Colonic mucosa (tissue), 4 donors: ENCODE measurements at regions of chr20 and their contacts with region 1.

Region 1: DNA sequence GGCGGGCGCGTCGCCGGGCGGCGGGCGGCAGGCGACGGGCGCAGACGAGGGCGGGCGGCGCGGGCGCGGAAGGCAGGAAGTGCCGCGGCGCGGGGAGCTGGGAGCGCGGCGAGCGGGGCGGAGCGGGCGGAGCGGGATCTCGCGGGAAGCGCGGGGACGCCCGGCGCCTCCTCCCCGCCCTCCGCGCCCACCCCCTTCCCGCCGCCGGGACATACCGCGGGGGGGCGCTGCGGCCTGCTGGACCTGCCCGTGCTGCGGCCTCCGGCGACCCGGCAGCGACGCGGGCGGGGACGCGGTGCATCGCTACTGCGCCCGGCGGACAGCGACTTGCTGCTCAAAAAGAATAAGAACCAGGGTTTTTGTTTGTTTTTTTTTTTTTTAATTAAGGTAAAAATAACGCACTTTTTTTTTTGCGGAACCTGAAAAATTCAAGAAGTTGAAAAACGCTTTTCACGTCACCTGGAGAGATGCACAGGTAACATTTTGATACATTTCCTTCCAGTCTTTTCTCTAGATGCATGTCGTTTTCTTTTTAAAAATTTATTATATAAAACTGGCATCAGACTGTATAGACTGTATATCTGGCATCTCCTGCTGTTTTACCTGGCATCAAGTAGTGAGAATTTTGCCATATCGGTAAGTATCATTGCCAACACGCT is at the start of gene CENPB:
- DNase-seq: peak; percentile 94
- H3K4me3 ChIP-seq: peak within 1 kb of the TSS; percentile 55
- H3K27ac ChIP-seq: peak within 1 kb of the TSS; percentile 38
- H3K4me1 ChIP-seq: peaks cover 20% of the 10 kb centered on the region
- H3K27me3 ChIP-seq: no peaks in the 10 kb centered on the region
- CTCF ChIP-seq: peak; percentile 67
- total RNA-seq, gene CENPB: 65.6 to 93.3 TPM

Region 2: GRCh38 chr20:3710703-3711483 is 75.9 kb before region 1 on chr20:
- intact Hi-C with region 1: no loop called
- DNase-seq: peak; percentile 75
- H3K4me3 ChIP-seq: no peak overlapping the region
- H3K27ac ChIP-seq: no peak overlapping the region
- H3K4me1 ChIP-seq: no peaks in the 10 kb centered on the region
- H3K27me3 ChIP-seq: no peaks in the 10 kb centered on the region
- CTCF ChIP-seq: peak; percentile 95

Region 3: GRCh38 chr20:3815716-3816340 is 29.0 kb after region 1 on chr20:
- intact Hi-C with region 1: loop called (anchors 2 kb)
- DNase-seq: no peak
- H3K4me3 ChIP-seq: no peak overlapping the region
- H3K27ac ChIP-seq: no peak overlapping the region
- H3K4me1 ChIP-seq: peaks cover 25% of the 10 kb centered on the region
- H3K27me3 ChIP-seq: no peaks in the 10 kb centered on the region
- CTCF ChIP-seq: no peak

Region 4: DNA sequence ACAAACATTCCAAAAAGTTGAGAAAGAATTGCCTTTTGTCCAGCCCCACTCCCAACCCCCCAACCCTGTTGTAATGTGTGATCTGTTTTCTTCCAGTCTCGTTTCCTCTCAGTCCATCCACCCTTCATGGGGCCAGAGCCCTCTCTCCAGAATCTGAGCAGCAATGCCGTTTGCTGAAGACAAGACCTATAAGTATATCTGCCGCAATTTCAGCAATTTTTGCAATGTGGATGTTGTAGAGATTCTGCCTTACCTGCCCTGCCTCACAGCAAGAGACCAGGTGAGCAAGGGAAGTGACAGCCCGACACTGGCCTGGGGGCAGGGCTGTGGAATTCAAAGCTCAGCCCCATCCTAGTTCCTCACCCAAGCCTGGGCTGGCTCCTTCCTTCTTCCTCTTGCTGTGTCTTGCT is 67.7 kb after region 1 on chr20:
- intact Hi-C with region 1: loop called (anchors 5 kb)
- DNase-seq: no peak
- H3K4me3 ChIP-seq: no peak overlapping the region
- H3K27ac ChIP-seq: no peak overlapping the region
- H3K4me1 ChIP-seq: no peaks in the 10 kb centered on the region
- H3K27me3 ChIP-seq: no peaks in the 10 kb centered on the region
- CTCF ChIP-seq: no peak

Region 5: DNA sequence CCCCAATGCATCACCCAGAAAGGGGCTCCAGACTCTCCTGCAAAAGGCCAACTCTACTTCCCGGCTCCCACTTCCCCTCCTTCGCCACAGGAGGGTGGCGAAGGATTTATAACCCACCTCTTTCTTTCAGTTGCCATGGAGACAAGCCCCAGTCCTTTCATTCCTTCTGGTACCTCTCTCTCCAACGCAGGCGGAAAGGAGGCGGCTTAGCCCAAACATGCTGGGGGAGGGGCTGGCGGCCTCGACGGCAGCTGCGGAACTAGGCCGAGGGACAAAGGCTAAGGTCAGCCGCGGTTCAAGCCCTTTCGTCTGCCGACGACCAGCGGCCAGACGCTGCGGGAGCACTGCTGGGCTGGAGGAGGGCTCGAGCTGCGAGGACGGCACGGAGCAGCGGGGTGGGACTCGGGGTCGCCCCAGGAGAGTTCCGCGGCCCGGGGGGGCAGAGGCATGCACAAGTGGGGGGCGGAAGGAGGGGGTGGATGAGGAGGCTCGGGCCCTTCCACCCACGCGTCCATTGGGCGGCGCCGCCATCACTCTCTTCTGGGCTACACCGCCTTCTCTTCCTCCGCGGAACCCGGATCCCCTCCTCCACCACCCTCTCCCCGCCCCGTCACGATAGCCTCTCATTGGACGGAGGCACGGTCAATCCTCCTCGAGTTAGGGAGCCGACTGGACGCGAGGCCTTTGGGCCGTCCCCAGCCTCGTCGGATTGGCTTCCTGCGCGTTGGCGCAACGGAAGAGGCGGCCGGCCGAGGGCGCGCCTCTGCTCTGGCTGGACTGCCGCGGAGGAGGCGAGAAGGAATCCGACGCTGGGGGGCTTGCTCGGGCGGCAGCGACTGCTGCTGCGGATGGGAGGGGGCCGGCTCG is 102.1 kb after region 1 on chr20 and contains the start of gene PANK2:
- intact Hi-C with region 1: no loop called
- DNase-seq: peak; percentile 100
- H3K4me3 ChIP-seq: peak within 1 kb of the TSS; percentile 91
- H3K27ac ChIP-seq: peak within 1 kb of the TSS; percentile 94
- H3K4me1 ChIP-seq: peaks cover 11% of the 10 kb centered on the region
- H3K27me3 ChIP-seq: no peaks in the 10 kb centered on the region
- CTCF ChIP-seq: peak; percentile 29
- total RNA-seq, gene PANK2: 29.7 to 31.3 TPM